Activated CD4-positive, alpha-beta T cell treated with anti-CD3 and anti-CD28 coated beads for 36 hours (primary cell): ENCODE measurements at regions of chr12 and their contacts with region 1.

Region 1: GRCh38 chr12:56104109-56104814 is at the start of gene PA2G4:
- DNase-seq: peak; percentile 99
- ATAC-seq: peak; percentile 95
- H3K4me3 Mint-ChIP-seq: peak within 1 kb of the TSS; percentile 100
- H3K27ac Mint-ChIP-seq: peak within 1 kb of the TSS; percentile 100
- H3K4me1 Mint-ChIP-seq: peaks cover 43% of the 10 kb centered on the region
- H3K27me3 Mint-ChIP-seq: no peaks in the 10 kb centered on the region
- total RNA-seq, gene PA2G4: 446 to 695 TPM

Region 2: DNA sequence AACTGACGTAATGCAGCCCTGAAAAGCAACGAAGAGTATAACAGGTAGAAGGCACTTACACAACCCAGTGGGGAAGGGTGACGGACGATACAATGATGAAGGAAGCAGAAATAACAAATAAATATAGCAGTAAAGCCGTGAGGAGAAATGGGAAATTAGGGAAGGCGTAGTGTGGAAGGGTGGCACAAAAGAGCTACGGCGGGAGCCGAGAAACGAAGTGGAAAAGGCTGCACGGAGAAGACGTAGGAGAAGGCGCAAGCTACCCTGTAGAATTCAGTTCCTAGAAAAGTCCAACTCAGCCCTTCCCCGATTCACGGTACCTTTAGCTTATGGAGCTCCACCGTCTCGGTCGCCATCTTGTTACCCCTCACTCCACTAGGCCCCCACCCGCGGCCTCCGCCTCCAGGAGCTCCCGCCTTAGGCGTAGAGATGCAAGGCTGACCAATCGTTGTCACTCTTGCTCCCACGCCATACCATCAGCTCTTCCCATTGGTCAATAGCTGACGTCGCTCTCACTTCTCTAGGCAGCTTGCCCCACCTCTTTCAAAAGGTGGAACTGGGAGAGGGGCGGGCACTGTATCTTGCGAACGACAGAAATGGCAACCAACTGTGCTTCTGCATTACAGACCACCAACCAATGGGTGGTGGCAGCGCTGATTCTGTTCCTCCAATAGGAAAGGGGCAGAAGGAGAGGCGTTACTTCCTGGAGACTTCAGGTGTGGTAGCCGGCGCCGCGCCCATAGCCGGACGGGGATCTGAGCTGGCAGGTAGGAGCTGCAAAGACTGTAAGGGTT is 286.7 kb before region 1 on chr12 and contains the starts of genes ORMDL2 and SARNP:
- CTCF ChIA-PET with region 1: interaction called, 4 read pairs
- POLR2A ChIA-PET with region 1: interaction called, 4 read pairs
- intact Hi-C with region 1: loop called in 1 of 2 experiments (anchors 1 kb)
- DNase-seq: peak; percentile 97
- ATAC-seq: peak; percentile 98
- H3K4me3 Mint-ChIP-seq: no peak within 1 kb of the TSS
- H3K27ac Mint-ChIP-seq: no peak within 1 kb of the TSS
- H3K4me1 Mint-ChIP-seq: peaks cover 49% of the 10 kb centered on the region
- H3K27me3 Mint-ChIP-seq: no peaks in the 10 kb centered on the region
- total RNA-seq, gene ORMDL2: 29.4 to 35.6 TPM
- total RNA-seq, gene SARNP: 111 to 114 TPM

Region 3: DNA sequence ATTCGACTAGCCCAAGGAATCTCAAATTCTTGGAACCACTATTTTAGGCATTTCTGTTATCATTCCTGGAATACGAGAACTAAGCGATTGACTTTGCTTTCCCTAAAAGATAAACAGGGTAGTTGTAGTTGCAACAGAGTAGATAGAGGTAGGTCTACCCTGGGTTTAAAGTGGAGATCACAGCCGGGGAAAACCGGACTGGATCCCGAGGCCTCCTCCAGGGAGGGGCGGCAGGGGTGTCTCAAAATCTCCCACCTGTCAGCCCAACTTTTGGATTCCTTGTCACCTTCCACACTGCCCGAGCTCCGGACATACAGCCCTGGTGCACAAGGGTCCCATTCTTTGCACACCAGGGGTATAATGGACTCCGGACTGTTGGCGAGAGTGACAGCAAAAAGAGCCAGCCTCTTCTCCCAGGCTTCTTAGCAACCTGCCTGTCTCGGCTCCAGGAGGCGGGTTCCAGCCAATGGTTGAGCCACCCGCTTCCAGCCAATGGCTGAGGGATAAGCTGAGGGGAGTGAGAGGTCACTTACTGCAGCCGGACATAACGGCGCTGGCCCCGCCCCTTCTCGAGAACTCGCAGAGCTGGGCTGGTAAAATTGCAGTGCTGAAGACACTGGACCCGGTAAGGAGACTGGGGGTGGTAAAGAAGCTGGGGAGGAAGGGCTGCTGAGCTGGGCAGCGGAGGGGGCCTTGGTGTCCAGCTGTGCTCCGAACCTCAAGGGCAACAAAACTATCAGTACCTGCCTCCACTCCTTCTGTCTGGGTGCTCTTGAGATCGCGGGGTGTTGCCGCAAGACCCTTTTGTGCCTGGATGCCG is 107.3 kb before region 1 on chr12 and contains the start of gene SUOX:
- CTCF ChIA-PET with region 1: interaction called, 27 read pairs
- POLR2A ChIA-PET with region 1: interaction called, 4 read pairs
- intact Hi-C with region 1: loop called in 1 of 2 experiments (anchors 1 kb)
- DNase-seq: peak; percentile 65
- ATAC-seq: peak; percentile 87
- H3K4me3 Mint-ChIP-seq: peak within 1 kb of the TSS; percentile 56
- H3K27ac Mint-ChIP-seq: peak within 1 kb of the TSS; percentile 37
- H3K4me1 Mint-ChIP-seq: peaks cover 20% of the 10 kb centered on the region
- H3K27me3 Mint-ChIP-seq: peaks cover 3% of the 10 kb centered on the region
- total RNA-seq, gene SUOX: 2.9 to 3.4 TPM

Region 4: GRCh38 chr12:56078990-56079664 is 25.1 kb before region 1 on chr12:
- CTCF ChIA-PET with region 1: interaction called, 7 read pairs
- POLR2A ChIA-PET with region 1: no interaction called
- intact Hi-C with region 1: loop called (anchors 1 kb)
- DNase-seq: peak; percentile 76
- ATAC-seq: peak; percentile 42
- H3K4me3 Mint-ChIP-seq: peak overlapping the region; percentile 74
- H3K27ac Mint-ChIP-seq: no peak overlapping the region
- H3K4me1 Mint-ChIP-seq: peaks cover 8% of the 10 kb centered on the region
- H3K27me3 Mint-ChIP-seq: peaks cover 6% of the 10 kb centered on the region

Region 5: DNA sequence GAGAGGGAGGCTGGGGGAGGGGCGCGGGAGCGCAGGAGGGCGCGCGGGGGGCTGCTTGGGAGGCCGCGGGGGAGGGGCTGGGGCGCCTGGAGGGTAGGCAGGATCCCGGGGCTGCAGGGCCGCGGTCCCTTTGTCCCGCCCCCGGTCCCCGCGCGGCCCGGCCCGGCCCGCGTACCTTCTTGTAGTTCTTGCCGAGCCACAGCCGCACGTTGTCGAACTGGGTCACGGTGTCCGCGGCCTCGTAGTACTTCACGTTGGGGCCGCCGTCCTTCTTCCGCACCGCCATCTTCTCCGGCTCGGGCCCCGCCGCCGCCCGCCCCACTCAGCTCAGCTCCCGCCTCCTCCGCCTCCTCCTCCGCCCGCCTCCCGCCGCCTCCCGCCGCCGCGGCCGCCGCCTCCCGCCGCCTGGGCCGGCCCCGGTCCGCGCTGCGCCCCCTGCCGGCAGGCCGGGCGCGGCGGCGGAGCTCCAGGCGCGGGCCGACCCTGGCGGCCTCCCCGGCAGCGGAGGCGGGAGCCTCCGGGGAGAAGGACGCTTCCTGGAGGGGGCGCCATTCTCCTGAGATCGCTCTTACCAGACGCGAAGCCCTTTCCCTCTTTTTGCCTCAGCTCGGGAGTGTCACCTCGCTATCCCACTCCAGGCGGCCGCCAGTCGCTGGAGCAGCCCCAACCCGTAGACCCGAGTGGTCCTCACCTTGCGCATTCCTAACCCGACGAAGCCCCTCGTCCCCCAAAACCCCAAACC is 85.1 kb after region 1 on chr12 and contains the start of gene SMARCC2:
- CTCF ChIA-PET with region 1: interaction called, 7 read pairs
- POLR2A ChIA-PET with region 1: interaction called, 8 read pairs
- intact Hi-C with region 1: loop called in 1 of 2 experiments (anchors 1 kb)
- DNase-seq: peak; percentile 94
- ATAC-seq: peak; percentile 82
- H3K4me3 Mint-ChIP-seq: peak within 1 kb of the TSS; percentile 82
- H3K27ac Mint-ChIP-seq: peak within 1 kb of the TSS; percentile 96
- H3K4me1 Mint-ChIP-seq: peaks cover 38% of the 10 kb centered on the region
- H3K27me3 Mint-ChIP-seq: no peaks in the 10 kb centered on the region
- total RNA-seq, gene SMARCC2: 96.9 to 123 TPM

Region 6: DNA sequence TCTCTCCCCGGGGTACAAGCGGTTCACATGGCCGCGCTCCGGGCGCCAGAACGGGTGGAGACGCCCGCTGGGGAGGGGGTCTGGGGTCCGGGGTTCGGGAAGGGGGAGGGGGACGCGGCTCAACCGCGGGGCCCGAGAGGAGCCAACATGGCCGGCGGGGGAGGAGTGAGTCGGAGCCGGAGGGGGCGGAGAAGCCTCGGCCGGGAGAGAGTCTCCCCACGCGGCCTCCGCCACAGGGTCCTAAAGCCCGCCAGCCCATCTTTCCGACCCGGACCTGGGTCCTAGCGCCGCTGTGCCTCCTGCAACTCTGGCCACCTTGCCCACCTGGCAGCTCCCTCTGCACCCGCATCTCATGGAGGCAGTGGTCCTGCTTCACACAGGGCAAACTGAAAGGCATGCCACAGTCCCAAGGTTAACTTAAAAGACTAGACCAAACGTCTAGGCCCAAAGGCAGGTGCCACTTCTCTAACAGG is 525.9 kb after region 1 on chr12 and contains the start of gene BAZ2A:
- CTCF ChIA-PET with region 1: no interaction called
- POLR2A ChIA-PET with region 1: no interaction called
- intact Hi-C with region 1: loop called in 1 of 2 experiments (anchors 5 kb)
- DNase-seq: peak; percentile 94
- ATAC-seq: peak; percentile 69
- H3K4me3 Mint-ChIP-seq: peak within 1 kb of the TSS; percentile 96
- H3K27ac Mint-ChIP-seq: peak within 1 kb of the TSS; percentile 93
- H3K4me1 Mint-ChIP-seq: peaks cover 75% of the 10 kb centered on the region
- H3K27me3 Mint-ChIP-seq: no peaks in the 10 kb centered on the region
- total RNA-seq, gene BAZ2A: 79.4 to 129 TPM